IMR-90 (cell line): ENCODE measurements at regions of chr6 and their contacts with region 1.

Region 1: GRCh38 chr6:154510143-154510905 is at the start of gene CNKSR3:
- DNase-seq: peak; percentile 95
- ATAC-seq: peak; percentile 89
- H3K4me3 ChIP-seq: peak within 1 kb of the TSS; percentile 88
- H3K27ac ChIP-seq: peak within 1 kb of the TSS; percentile 89
- H3K4me1 ChIP-seq: peaks cover 5% of the 10 kb centered on the region
- H3K27me3 ChIP-seq: no peaks in the 10 kb centered on the region
- CTCF ChIP-seq: peak; percentile 13; the same call in 1 of the 2 replicates
- POLR2A ChIP-seq: peak; percentile 58
- RAD21 ChIP-seq: 0 out of 2 replicates have a peak, but pooled peaks have one; percentile 27
- total RNA-seq, gene CNKSR3: 15.0 and 15.8 TPM in 2 replicates

Region 2: DNA sequence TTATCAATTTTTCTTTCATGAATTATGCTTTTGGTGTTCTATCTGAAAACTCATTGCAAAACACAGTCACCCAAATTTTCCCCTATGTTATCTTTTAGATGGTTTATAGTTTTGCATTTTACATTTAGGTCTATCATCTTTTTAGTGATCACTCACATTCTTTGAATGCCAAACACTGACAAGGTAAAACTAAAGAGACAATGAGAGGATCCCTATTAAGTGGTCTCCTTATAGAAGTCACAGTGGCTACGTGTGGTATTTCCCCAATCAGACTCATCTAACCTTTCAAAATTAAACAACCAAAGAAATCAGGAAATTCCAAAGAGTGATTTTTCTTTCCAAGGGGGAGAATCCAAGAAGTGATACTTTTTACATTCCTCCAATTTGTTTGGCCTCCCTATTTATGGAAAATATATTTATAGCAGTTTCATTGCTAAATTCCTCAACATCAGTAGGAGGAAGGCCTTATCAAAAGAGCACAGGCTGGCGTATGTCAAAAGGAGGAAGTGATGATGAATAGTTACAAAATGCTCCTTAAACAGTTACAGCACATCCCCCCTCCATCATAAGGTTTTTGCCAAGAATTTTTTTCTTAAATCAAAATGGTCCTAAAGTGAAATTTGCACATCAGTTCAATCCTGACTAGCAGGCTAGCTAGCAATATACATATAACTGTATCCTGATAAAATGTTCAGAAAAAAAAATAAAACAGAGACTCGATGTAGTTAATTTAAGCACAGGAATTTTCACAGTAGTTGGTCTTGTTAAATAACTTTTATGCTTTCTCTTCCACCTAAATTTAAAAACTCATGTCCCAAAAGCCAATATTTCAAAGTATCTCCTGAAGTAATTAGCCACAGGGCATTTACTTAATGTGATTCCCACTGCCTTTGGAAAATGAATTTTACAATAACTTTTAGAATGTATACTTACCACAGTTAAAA is 77.5 kb before region 1 on chr6:
- CTCF ChIA-PET with region 1: no interaction called
- POLR2A ChIA-PET with region 1: no interaction called
- dilution Hi-C with region 1: no loop called
- in situ Hi-C with region 1: no loop called
- intact Hi-C with region 1: no loop called
- DNase-seq: no peak
- ATAC-seq: 0 out of 2 replicates have a peak, but pooled peaks have one; percentile 11
- H3K4me3 ChIP-seq: no peak overlapping the region
- H3K27ac ChIP-seq: no peak overlapping the region
- H3K4me1 ChIP-seq: peaks cover 6% of the 10 kb centered on the region
- H3K27me3 ChIP-seq: no peaks in the 10 kb centered on the region
- CTCF ChIP-seq: no peak
- POLR2A ChIP-seq: no peak
- RAD21 ChIP-seq: no peak

Region 3: DNA sequence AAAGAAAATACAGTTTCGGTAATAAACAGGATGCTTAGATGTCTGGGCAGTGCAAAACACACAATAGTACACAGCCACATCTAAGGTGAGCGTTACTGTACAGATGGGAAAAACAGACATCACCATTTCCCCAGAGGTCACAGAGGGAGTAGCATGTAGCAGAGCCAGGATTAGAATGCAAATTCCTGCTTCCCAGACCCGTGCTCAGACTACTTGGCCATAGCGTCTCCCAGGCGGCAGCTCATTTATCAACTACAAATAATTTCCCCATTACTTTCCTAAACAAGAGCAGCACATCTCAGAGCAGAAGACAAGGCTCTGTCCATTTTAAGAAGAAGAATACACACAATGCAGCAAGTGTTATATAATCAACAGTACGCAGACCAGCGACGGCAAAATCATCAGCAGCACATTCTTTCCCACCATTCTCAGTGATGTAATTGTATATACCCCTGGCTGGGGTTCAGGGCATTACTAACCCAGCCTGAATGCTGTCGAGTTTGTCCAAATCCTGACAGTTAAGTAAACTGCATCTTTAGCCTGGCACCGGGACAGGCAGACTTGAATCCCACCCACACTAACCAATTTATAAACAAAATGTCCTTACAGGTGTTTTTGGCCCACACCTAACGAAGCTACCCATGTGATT is 61.8 kb before region 1 on chr6:
- CTCF ChIA-PET with region 1: no interaction called
- POLR2A ChIA-PET with region 1: no interaction called
- dilution Hi-C with region 1: no loop called
- in situ Hi-C with region 1: no loop called
- intact Hi-C with region 1: loop called (anchors 1 kb)
- DNase-seq: peak; percentile 93
- ATAC-seq: peak; percentile 91
- H3K4me3 ChIP-seq: no peak overlapping the region
- H3K27ac ChIP-seq: no peak overlapping the region
- H3K4me1 ChIP-seq: peaks cover 8% of the 10 kb centered on the region
- H3K27me3 ChIP-seq: no peaks in the 10 kb centered on the region
- CTCF ChIP-seq: 0 out of 2 replicates have a peak, but pooled peaks have one; percentile 12
- POLR2A ChIP-seq: no peak
- RAD21 ChIP-seq: peak; percentile 33; the same call in 1 of the 2 replicates

Region 4: DNA sequence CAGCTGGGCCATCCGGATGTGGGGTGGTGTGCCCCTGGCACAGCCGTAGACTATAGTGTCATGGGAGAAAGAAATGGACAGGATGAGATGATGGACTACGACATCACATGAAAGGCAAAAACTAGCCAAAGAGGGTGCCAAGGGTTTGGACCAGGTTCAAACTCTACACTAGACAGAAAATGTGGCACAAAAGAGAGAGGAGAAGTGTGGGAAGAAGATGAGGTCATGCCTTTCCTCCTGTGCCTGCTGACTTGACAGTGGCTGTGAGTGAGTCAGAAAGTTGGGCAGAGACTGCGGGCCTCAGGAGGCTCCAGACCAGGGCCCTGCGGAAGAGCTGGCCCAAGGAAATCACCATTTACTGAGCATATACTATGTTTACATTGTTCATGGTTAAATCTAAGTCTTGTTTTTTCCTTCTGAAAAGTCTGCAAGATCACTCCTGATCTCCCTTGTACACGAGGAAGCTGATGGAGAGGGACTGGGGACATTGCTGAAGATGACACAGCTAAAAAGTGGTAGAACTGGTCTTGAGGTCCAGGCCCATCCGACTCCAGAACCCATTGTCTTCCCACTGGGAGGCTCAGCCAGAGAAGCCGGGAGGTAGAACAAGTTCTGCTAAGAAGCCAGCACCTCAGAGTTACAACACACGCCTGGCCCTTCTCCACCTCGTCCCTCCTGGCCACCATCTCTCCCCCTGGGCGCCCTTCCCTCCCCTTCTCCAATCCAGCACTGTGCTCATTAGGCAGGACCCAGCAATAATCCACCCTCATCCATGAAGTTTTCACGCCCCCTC is 35.5 kb before region 1 on chr6:
- CTCF ChIA-PET with region 1: no interaction called
- POLR2A ChIA-PET with region 1: interaction called, 13 read pairs
- dilution Hi-C with region 1: no loop called
- in situ Hi-C with region 1: no loop called
- intact Hi-C with region 1: loop called (anchors 2 kb)
- DNase-seq: peak; percentile 84
- ATAC-seq: peak; percentile 53
- H3K4me3 ChIP-seq: no peak overlapping the region
- H3K27ac ChIP-seq: no peak overlapping the region
- H3K4me1 ChIP-seq: peaks cover 16% of the 10 kb centered on the region
- H3K27me3 ChIP-seq: no peaks in the 10 kb centered on the region
- CTCF ChIP-seq: no peak
- POLR2A ChIP-seq: no peak
- RAD21 ChIP-seq: no peak

Region 5: DNA sequence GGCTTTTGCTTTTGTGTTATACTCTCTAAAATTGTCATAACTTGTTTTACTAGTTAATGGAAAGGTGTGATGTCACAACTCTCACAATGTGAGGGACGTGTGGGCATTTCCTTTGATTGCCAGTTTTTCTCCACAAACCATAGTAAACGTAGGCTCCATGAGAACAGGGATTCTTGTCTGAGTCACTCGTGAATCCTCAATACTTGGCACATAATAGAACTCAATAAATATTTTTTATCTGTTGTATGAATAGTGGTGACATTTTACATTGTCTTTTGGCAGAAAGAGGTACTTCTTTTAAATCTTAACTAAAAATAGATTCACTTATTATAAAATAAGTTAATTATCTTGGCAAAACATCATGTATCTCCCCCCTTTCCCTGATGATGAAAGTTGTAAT is 69.2 kb after region 1 on chr6:
- CTCF ChIA-PET with region 1: no interaction called
- POLR2A ChIA-PET with region 1: no interaction called
- dilution Hi-C with region 1: no loop called
- in situ Hi-C with region 1: no loop called
- intact Hi-C with region 1: no loop called
- DNase-seq: no peak
- ATAC-seq: no peak
- H3K4me3 ChIP-seq: no peak overlapping the region
- H3K27ac ChIP-seq: no peak overlapping the region
- H3K4me1 ChIP-seq: no peaks in the 10 kb centered on the region
- H3K27me3 ChIP-seq: peaks cover 2% of the 10 kb centered on the region
- CTCF ChIP-seq: no peak
- POLR2A ChIP-seq: no peak
- RAD21 ChIP-seq: no peak

Region 6: DNA sequence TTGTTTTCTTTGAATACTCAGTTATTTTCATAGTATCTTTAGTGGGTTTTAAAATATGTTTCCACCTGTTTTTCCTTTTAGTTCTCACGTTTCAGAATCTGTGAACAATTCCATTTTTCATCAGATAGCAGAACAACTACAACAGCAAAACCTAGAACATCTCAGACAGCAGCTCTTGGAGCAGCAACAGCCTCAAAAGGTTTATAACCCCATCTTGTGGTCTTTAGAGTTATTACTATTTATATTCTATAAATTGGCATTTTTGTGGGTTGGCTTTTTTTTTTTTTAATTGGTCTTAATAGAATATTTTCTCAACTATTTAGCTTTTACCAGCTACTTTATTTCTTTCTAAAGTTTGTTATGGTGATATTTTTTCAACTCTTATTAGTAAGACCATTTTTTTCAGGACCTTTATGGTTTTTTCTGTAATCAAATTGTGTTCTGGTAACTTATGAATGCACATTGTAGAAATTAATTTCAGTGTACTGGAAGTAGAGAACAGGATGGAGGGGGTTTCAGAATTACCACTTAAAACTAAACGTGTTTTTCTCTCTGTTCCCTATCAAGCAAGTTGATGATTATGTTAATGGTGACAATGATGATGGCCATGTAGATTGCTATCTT is 295.1 kb after region 1 on chr6:
- CTCF ChIA-PET with region 1: no interaction called
- POLR2A ChIA-PET with region 1: no interaction called
- dilution Hi-C with region 1: no loop called
- in situ Hi-C with region 1: no loop called
- intact Hi-C with region 1: loop called (anchors 10 kb)
- DNase-seq: peak; percentile 70
- ATAC-seq: peak; percentile 80
- H3K4me3 ChIP-seq: no peak overlapping the region
- H3K27ac ChIP-seq: no peak overlapping the region
- H3K4me1 ChIP-seq: no peaks in the 10 kb centered on the region
- H3K27me3 ChIP-seq: no peaks in the 10 kb centered on the region
- CTCF ChIP-seq: peak; percentile 69
- POLR2A ChIP-seq: no peak
- RAD21 ChIP-seq: peak; percentile 73